Naive thymus-derived CD8-positive, alpha-beta T cell (primary cell): ENCODE measurements at regions of chr13 and their contacts with region 1.

Region 1: DNA sequence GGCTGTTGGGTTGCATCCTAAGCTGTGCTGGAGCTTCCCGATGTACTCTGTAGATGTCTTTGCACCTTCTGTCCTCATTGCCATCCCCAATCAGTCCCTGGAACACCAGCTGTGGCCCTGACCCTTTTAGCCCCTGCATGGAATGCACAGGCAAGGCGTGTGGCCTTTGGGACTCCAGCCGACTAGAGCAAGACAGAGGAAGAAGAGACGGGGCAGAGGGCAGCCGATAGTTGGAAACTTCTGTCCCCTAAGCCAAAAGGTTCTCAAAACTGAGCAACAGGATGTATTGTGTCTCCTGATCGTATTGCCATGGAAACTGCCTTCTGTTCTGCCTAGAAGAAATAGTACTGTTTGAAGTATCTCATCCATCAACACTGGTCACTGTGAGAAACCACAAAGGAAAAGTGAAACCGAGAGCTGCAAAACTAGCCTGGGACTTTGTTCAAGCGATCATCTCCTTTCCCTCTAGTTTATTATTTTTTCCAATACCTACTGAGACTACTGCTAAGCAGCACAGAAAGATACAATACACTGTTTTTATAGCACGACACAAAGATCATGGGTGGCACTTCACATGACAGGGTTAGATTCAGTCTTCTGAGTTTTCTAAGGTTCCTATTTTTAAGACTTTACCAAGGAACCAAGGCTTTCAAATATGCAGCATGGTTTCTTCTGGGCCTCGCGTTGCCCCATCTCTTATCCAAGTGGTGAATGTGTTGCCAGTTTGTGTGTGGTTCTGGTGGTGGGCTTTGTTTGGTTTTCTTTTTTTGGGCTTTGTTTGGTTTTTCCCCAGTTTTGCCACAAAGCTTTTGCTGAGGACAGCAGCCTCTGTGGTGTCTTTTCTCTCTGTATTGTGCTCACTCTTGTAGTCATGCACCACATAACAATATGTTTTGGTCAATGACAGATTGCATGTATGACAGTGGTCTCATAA is 49.2 kb upstream of the GPR183 start:
- DNase-seq: peak; percentile 34 to 94 (median 82)
- ATAC-seq: peak; percentile 59 to 68
- H3K4me3 Mint-ChIP-seq: peak overlapping the region; percentile 61 to 85 (median 78)
- H3K27ac Mint-ChIP-seq: peak overlapping the region; percentile 96 to 100 (median 99)
- H3K4me1 Mint-ChIP-seq: peaks cover 72 to 100% (median 98%) of the 10 kb centered on the region in 4 donors
- H3K27me3 Mint-ChIP-seq: peaks cover 0 to 1% (median 0%) of the 10 kb centered on the region in 5 donors

Region 2: GRCh38 chr13:99214232-99214631 is 142.2 kb before region 1 on chr13:
- POLR2A ChIA-PET with region 1: interaction called, 10 read pairs
- DNase-seq: peak in 6 of 10 donors; percentile 33 to 73 (median 54)
- ATAC-seq: peak; percentile 31 to 32
- H3K4me3 Mint-ChIP-seq: peak overlapping the region; percentile 59 to 98 (median 93)
- H3K27ac Mint-ChIP-seq: peak overlapping the region; percentile 84 to 100 (median 99)
- H3K4me1 Mint-ChIP-seq: peaks cover 46 to 88% (median 85%) of the 10 kb centered on the region in 4 donors
- H3K27me3 Mint-ChIP-seq: no peaks in the 10 kb centered on the region

Region 3: DNA sequence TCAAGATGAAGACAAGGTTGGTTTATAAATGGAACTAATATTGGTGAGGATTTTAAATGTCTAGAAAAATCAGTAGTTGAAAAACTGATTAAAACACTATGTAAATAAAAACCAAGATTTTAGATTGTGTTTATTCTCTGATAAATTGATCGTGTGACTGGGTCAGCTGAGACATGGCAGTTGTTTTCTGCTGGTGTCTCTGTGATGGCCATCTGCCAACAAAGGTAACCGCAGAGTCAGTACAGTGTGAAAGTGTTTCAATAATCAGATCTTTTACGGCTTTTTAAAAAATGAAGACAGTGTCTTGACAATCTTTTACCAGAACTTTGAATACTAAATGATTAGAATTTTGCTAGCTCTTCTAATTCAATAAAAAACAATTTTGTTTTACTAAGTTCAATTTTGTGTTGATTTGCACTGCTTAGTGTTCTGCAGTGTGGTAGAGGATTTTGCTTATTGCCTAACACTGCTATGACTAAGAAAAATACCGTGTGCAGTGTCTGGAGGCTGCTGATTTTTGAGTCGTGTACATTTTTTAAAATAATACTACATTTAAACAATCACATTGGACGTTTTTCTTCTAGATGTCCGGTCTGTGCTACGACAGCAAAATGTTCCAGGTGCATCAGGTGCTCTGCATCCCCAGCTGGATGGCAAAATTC is 16.6 kb before region 1 on chr13:
- POLR2A ChIA-PET with region 1: interaction called, 17 read pairs
- DNase-seq: peak in 5 of 10 donors; percentile 45 to 70 (median 50)
- ATAC-seq: peak; percentile 65 to 84
- H3K4me3 Mint-ChIP-seq: peak overlapping the region; percentile 28 to 75 (median 52)
- H3K27ac Mint-ChIP-seq: peak overlapping the region; percentile 61 to 94 (median 84)
- H3K4me1 Mint-ChIP-seq: peaks cover 38 to 77% (median 72%) of the 10 kb centered on the region in 4 donors
- H3K27me3 Mint-ChIP-seq: no peaks in the 10 kb centered on the region

Region 4: DNA sequence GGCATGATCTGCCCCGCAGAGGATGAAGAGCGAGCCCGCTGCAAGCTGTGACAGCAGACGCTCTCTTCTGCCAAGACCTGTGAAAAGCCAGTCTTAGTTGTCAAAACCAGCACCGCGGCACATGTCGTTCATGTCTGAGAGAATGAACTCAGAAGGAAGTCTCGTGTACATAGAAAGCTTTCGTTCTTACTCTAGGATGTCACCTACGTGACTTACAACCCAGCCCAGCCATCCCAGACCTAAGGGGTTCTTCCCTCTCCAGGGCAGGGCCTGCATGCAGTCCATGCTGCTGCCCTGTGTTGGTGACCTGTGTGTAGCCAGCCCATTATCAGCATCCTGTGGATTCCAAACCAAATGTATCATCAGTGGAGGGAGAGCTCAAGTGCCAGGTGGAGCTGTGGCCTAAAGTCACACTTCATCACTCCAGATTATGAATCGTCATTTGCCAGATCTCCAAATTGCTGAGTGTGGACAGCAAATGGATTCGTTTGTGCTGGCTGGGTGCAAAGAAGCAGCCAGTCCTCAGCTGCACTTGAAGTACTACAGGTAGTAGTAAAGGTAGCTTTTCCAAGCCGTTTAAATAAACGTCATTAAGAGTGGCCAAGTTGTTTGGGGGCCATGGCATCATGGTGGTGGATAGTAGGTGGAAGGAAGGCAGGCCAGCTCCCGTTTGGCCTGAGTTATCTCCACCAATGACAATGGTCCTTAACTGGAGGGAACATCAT is 24.7 kb after region 1 on chr13:
- POLR2A ChIA-PET with region 1: interaction called, 155 read pairs
- DNase-seq: peak in 6 of 10 donors; percentile 53 to 67 (median 60)
- ATAC-seq: peak; percentile 26 to 36
- H3K4me3 Mint-ChIP-seq: peak overlapping the region; percentile 20 to 84 (median 76)
- H3K27ac Mint-ChIP-seq: peak overlapping the region; percentile 96 to 100 (median 98)
- H3K4me1 Mint-ChIP-seq: peaks cover 49 to 97% (median 91%) of the 10 kb centered on the region in 4 donors
- H3K27me3 Mint-ChIP-seq: no peaks in the 10 kb centered on the region

Region 5: GRCh38 chr13:99436686-99437416 is 80.4 kb after region 1 on chr13:
- POLR2A ChIA-PET with region 1: interaction called, 10 read pairs
- DNase-seq: peak; percentile 90 to 99 (median 94)
- ATAC-seq: peak; percentile 62 to 68
- H3K4me3 Mint-ChIP-seq: peak overlapping the region; percentile 10 to 84 (median 67)
- H3K27ac Mint-ChIP-seq: peak overlapping the region; percentile 75 to 96 (median 92)
- H3K4me1 Mint-ChIP-seq: peaks cover 24 to 64% (median 58%) of the 10 kb centered on the region in 4 donors
- H3K27me3 Mint-ChIP-seq: no peaks in the 10 kb centered on the region